ENCODE measurements at regions of chr3 and their contacts with region 1.

Region 1: DNA sequence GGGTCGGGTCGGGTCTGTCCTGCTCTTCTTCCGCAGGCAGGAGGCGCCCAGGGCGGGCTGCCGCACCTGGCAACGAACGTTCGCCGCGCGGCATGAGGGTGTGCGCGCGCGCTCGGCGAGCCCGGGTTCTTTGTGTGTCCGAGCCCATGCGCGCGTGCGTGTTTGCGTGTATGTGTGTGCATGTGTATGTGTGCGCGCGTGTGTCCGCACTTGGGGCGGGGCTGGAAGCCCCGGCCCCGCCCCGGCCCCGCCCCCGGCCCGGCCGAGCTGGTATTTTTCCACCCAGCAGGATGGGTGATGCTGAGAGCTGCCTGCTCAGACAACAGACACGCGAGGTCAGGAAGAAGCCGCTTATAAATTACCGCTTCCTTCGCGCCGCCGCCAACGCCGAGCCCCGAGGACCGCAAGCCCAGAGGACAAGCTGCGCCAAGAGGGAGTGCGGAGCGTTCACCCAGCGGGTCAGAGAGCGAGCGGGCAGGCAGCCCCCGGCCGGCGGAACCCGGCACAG is at the start of gene SLC6A6:
- DNase-seq: peak; percentile 98
- ATAC-seq: peak; percentile 86
- H3K4me3 ChIP-seq: peak within 1 kb of the TSS; percentile 95
- H3K27ac ChIP-seq: peak within 1 kb of the TSS; percentile 77
- H3K4me1 ChIP-seq: peaks cover 32% of the 10 kb centered on the region
- H3K27me3 ChIP-seq: no peaks in the 10 kb centered on the region
- CTCF ChIP-seq: peak; percentile 57
- total RNA-seq, gene SLC6A6: 28.1 and 31.9 TPM in 2 replicates

Region 2: GRCh38 chr3:14203521-14204079 is 198.8 kb before region 1 on chr3:
- CTCF ChIA-PET with region 1: interaction called, 9 read pairs
- POLR2A ChIA-PET with region 1: no interaction called
- intact Hi-C with region 1: loop called (anchors 2 kb)
- DNase-seq: peak; percentile 77
- ATAC-seq: peak; percentile 77
- H3K4me3 ChIP-seq: no peak overlapping the region
- H3K27ac ChIP-seq: no peak overlapping the region
- H3K4me1 ChIP-seq: no peaks in the 10 kb centered on the region
- H3K27me3 ChIP-seq: no peaks in the 10 kb centered on the region
- CTCF ChIP-seq: peak; percentile 93

Region 3: GRCh38 chr3:14335774-14336756 is 66.3 kb before region 1 on chr3:
- CTCF ChIA-PET with region 1: no interaction called
- POLR2A ChIA-PET with region 1: interaction called, 4 read pairs
- intact Hi-C with region 1: loop called (anchors 2 kb)
- DNase-seq: peak; percentile 93
- ATAC-seq: peak; percentile 91
- H3K4me3 ChIP-seq: no peak overlapping the region; the same call in 1 of the 2 replicates
- H3K27ac ChIP-seq: peak overlapping the region; percentile 63
- H3K4me1 ChIP-seq: peaks cover 21% of the 10 kb centered on the region
- H3K27me3 ChIP-seq: no peaks in the 10 kb centered on the region
- CTCF ChIP-seq: no peak

Region 4: GRCh38 chr3:14431892-14432834 is 29.8 kb after region 1 on chr3:
- CTCF ChIA-PET with region 1: no interaction called
- POLR2A ChIA-PET with region 1: no interaction called
- intact Hi-C with region 1: loop called (anchors 1 kb)
- DNase-seq: peak; percentile 96
- ATAC-seq: peak; percentile 89
- H3K4me3 ChIP-seq: peak overlapping the region; percentile 18; the same call in 1 of the 2 replicates
- H3K27ac ChIP-seq: peak overlapping the region; percentile 75
- H3K4me1 ChIP-seq: peaks cover 53% of the 10 kb centered on the region
- H3K27me3 ChIP-seq: no peaks in the 10 kb centered on the region
- CTCF ChIP-seq: no peak

Region 5: GRCh38 chr3:14461748-14462324 is 59.5 kb after region 1 on chr3:
- CTCF ChIA-PET with region 1: interaction called, 9 read pairs
- POLR2A ChIA-PET with region 1: no interaction called
- intact Hi-C with region 1: loop called (anchors 1 kb)
- DNase-seq: peak; percentile 74
- ATAC-seq: peak; percentile 73
- H3K4me3 ChIP-seq: no peak overlapping the region
- H3K27ac ChIP-seq: no peak overlapping the region
- H3K4me1 ChIP-seq: peaks cover 12% of the 10 kb centered on the region
- H3K27me3 ChIP-seq: no peaks in the 10 kb centered on the region
- CTCF ChIP-seq: peak; percentile 97